ENCODE measurements at regions of chr19 and their contacts with region 1.

Region 1: GRCh38 chr19:15149737-15150136 is 42.5 kb downstream of the SYDE1 start:
- DNase-seq: no peak

Region 2: DNA sequence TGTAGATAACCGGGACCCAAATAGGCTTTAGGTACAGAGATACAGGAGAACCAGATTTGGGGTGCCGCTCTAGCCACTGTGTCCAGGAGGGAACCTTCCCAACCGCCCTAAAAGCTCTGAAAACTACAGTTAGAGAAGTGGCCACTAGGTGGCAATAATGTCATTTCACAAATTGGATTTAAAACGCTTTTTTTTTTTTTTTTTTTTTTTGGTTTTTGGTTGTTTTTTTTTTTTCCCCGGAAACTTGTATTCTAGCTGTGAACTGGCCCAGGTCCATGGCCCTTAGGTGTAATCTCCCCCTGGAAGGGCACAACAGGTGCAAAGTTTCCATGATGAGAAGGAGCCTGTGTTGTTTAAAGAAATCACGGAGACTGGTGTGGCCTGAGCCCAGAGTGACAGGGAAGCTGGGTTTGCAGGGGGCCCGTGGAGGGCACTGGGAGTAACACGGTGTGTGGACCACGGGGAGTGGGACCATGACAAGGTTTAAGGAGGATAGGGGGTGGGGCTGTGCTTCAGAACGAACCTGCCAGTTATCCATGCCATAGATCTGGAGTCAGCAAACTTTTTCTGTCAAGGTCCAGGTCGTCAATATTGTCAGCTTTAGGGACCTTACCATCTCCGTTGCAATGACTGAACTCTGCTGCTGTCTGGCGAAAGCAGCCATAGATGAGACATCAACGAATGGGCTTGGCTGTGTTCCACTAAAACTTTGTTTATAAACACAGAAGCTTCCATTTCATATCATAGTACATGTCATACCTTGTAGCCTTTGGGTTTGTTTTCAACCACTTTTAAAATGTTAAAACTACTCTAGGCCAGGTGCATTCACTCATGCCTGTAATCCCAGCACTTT is 57.6 kb before region 1 on chr19:
- intact Hi-C with region 1: loop called (anchors 2 kb)
- DNase-seq: no peak

Region 3: DNA sequence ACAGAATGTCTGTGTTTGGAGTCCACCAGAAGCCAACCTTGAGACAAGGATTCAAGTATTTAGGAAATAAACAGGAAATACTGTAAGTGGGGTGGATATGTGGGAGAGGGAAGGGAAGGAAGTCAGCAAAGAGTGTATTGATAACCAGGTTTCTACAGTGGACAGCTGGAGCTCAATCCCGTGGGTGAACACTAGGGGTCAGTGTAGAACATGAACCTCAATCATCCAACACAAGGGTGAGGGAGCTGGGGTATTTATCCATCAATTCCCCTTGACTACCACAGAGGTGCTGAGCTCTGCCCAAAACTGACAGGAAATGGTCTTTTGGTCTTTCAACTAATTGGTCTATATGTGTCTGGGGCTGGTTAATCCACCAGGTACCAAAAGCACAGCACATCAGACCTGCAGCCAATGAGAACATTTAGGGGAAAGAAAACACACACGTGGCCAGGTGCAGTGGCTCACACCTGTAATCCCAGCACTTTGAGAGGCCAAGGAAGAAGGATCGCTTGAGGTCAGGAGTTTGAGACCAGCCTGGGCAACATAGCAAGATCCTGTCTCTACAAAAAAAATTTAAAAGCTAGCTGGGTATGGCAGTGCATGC is 48.2 kb before region 1 on chr19:
- intact Hi-C with region 1: loop called (anchors 2 kb)
- DNase-seq: no peak